ENCODE measurements at regions of chr6 and their contacts with region 1.

Region 1: GRCh38 chr6:63824722-63825121 is 189.1 kb downstream of the PHF3 start:
- DNase-seq: no peak
- H3K4me3 ChIP-seq: no peak overlapping the region
- H3K27ac ChIP-seq: no peak overlapping the region
- H3K4me1 ChIP-seq: no peaks in the 10 kb centered on the region
- H3K27me3 ChIP-seq: no peaks in the 10 kb centered on the region
- CTCF ChIP-seq: no peak
- EP300 ChIP-seq: no peak
- POLR2A ChIP-seq: no peak
- RAD21 ChIP-seq: no peak

Region 2: GRCh38 chr6:63813566-63814120 is 11.1 kb before region 1 on chr6:
- CTCF ChIA-PET with region 1: interaction called, 10 read pairs
- POLR2A ChIA-PET with region 1: no interaction called
- DNase-seq: no peak
- H3K4me3 ChIP-seq: no peak overlapping the region
- H3K27ac ChIP-seq: no peak overlapping the region
- H3K4me1 ChIP-seq: peaks cover 0 to 3% (median 0%) of the 10 kb centered on the region in 4 experiments; a peak in 1 of 7 replicates
- H3K27me3 ChIP-seq: no peaks in the 10 kb centered on the region
- CTCF ChIP-seq: no peak
- EP300 ChIP-seq: no peak
- POLR2A ChIP-seq: no peak
- RAD21 ChIP-seq: peak in 1 of 2 experiments; percentile 11; a peak in 1 of 4 replicates

Measured in H1 (cell line).